ENCODE measurements at regions of chr2 and their contacts with region 1.

Region 1: DNA sequence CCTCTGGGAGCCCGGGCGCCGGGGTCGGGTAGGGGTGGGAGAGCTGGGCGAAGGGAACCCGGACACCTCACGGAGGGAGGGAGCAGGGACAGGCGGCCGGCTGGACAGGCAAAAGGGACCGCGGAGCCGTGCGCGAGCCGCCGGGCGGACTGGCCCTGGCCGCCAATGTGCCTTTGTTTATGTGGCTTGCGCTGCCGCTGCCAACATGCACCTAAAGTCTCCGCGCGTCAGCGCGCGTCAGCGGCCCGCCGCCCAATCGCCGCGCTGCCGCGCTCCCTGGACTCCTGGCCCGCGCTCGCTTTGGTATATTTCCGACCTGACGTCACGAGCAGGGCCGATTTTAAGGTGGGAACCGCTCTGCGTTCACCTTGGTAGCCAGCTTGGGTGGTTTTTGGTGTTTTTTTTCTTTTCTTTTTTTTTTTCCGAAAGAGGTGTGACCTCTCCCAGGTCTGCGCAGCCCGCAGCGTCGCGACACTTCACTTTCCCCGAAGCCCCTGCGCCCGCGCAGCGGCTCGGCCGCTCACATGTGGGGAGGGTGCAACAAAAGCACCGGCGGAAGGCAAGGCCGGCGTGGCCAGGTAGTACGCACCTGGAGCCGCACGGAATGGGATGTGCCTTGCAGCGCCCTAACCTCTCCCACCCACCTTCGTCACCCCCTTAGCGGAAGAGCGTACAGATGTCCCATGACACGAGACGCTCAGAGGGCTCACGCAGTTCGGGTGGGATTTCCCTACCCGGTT is at the start of gene NR4A2:
- DNase-seq: peak; percentile 83 to 95 (median 90)
- ATAC-seq: peak; percentile 72
- H3K4me3 ChIP-seq: peak within 1 kb of the TSS; percentile 90
- H3K4me3 Mint-ChIP-seq: peak within 1 kb of the TSS; percentile 90 to 99 (median 96)
- H3K27ac ChIP-seq: peak within 1 kb of the TSS; percentile 100
- H3K27ac Mint-ChIP-seq: peak within 1 kb of the TSS; percentile 92 to 100 (median 99)
- H3K4me1 ChIP-seq: peaks cover 0 to 4% of the 10 kb centered on the region in 2 donors
- H3K4me1 Mint-ChIP-seq: peaks cover 27 to 47% (median 40%) of the 10 kb centered on the region in 7 donors
- H3K27me3 ChIP-seq: no peaks in the 10 kb centered on the region
- H3K27me3 Mint-ChIP-seq: peaks cover 9 to 27% (median 16%) of the 10 kb centered on the region in 5 donors
- total RNA-seq, gene NR4A2: 2.2 to 252 (median 3.2) TPM

Region 2: GRCh38 chr2:155528034-155528433 is 804.7 kb before region 1 on chr2:
- CTCF ChIA-PET with region 1: no interaction called
- POLR2A ChIA-PET with region 1: no interaction called
- intact Hi-C with region 1: no loop called
- DNase-seq: no peak
- ATAC-seq: no peak
- H3K4me3 ChIP-seq: no peak overlapping the region
- H3K4me3 Mint-ChIP-seq: no peak overlapping the region
- H3K27ac ChIP-seq: no peak overlapping the region
- H3K27ac Mint-ChIP-seq: no peak overlapping the region
- H3K4me1 ChIP-seq: no peaks in the 10 kb centered on the region
- H3K4me1 Mint-ChIP-seq: no peaks in the 10 kb centered on the region
- H3K27me3 ChIP-seq: no peaks in the 10 kb centered on the region
- H3K27me3 Mint-ChIP-seq: no peaks in the 10 kb centered on the region

Region 3: GRCh38 chr2:155994315-155994714 is 338.4 kb before region 1 on chr2:
- CTCF ChIA-PET with region 1: no interaction called
- POLR2A ChIA-PET with region 1: no interaction called
- intact Hi-C with region 1: no loop called
- DNase-seq: no peak
- ATAC-seq: no peak
- H3K4me3 ChIP-seq: no peak overlapping the region
- H3K4me3 Mint-ChIP-seq: no peak overlapping the region
- H3K27ac ChIP-seq: no peak overlapping the region
- H3K27ac Mint-ChIP-seq: no peak overlapping the region
- H3K4me1 ChIP-seq: no peaks in the 10 kb centered on the region
- H3K4me1 Mint-ChIP-seq: no peaks in the 10 kb centered on the region
- H3K27me3 ChIP-seq: no peaks in the 10 kb centered on the region
- H3K27me3 Mint-ChIP-seq: peaks cover 0 to 4% (median 0%) of the 10 kb centered on the region in 5 donors

Region 4: DNA sequence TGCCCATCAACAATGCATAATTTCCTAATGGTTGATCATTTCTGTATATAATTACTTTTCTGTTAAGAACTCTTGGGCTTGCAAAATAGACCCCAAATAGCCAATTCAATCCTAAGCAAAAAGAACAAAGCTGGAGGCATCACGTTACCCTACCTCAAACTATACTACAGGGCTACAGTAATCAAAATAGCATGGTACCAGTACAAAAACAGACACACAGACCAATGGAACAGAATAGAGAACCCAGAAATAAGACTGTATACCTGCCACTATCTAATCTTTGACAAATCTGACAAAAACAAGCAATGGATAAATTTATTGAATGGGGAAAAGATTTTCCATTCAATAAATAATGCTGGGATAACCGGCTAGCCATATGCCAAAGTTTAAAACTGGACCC is 78.9 kb before region 1 on chr2:
- CTCF ChIA-PET with region 1: no interaction called
- POLR2A ChIA-PET with region 1: no interaction called
- intact Hi-C with region 1: loop called in 1 of 2 experiments (anchors 5 kb)
- DNase-seq: no peak
- ATAC-seq: no peak
- H3K4me3 ChIP-seq: no peak overlapping the region
- H3K4me3 Mint-ChIP-seq: peak overlapping the region in 7 of 10 donors; percentile 42 to 83 (median 75)
- H3K27ac ChIP-seq: no peak overlapping the region
- H3K27ac Mint-ChIP-seq: peak overlapping the region in 2 of 9 donors; percentile 7 to 88
- H3K4me1 ChIP-seq: no peaks in the 10 kb centered on the region
- H3K4me1 Mint-ChIP-seq: peaks cover 0 to 6% (median 0%) of the 10 kb centered on the region in 7 donors
- H3K27me3 ChIP-seq: no peaks in the 10 kb centered on the region
- H3K27me3 Mint-ChIP-seq: peaks cover 0 to 16% (median 9%) of the 10 kb centered on the region in 5 donors

Region 5: DNA sequence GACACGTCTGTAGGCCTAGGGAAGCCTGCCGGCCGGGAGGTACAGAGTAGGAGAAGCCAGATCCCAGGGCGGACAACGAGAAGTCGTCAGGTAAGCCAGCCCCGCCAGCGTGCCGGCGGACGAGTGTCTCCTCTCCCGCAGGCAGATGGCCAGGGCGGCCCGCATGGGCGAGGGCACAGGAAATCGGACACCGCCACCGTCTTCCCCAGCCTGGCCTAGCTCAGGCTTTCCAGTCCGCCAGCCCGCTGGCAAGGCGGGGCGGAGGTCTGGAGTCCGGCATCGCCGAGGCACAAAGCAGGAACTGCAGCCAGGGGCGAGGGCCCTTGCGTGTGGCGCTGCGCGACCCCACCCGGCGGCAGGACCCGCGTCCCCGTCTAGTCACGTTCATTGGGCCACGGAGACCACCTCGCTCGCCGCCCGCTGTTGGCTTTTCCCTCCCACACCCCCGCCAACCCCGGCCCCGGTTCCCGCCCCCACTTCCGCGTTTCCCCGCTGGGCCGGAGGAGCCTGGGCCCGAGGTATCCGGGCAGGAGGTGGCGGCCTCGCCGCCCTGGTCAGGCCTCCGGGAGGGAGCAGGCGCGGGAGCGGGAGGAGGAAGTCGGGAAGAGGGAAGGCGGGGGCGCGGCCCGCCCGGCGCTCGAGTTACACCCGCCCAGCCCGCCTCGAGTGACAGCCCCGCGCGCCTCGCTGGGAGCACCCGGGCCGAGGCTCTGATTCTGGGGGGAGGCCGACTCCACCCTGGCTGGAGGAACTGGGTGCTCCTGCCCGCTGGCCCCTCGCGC is 103.2 kb after region 1 on chr2 and contains the start of gene GPD2:
- CTCF ChIA-PET with region 1: no interaction called
- POLR2A ChIA-PET with region 1: interaction called, 20 read pairs
- intact Hi-C with region 1: loop called (anchors 1 kb)
- DNase-seq: peak; percentile 37 to 71 (median 58)
- ATAC-seq: peak; percentile 74
- H3K4me3 ChIP-seq: peak within 1 kb of the TSS; percentile 72
- H3K4me3 Mint-ChIP-seq: peak within 1 kb of the TSS; percentile 87 to 100 (median 98)
- H3K27ac ChIP-seq: peak within 1 kb of the TSS; percentile 71
- H3K27ac Mint-ChIP-seq: peak within 1 kb of the TSS; percentile 93 to 98 (median 95)
- H3K4me1 ChIP-seq: peaks cover 16 to 18% of the 10 kb centered on the region in 2 donors
- H3K4me1 Mint-ChIP-seq: peaks cover 25 to 51% (median 38%) of the 10 kb centered on the region in 7 donors
- H3K27me3 ChIP-seq: no peaks in the 10 kb centered on the region
- H3K27me3 Mint-ChIP-seq: no peaks in the 10 kb centered on the region
- total RNA-seq, gene GPD2: 7.8 to 17.1 (median 11.6) TPM

Region 6: DNA sequence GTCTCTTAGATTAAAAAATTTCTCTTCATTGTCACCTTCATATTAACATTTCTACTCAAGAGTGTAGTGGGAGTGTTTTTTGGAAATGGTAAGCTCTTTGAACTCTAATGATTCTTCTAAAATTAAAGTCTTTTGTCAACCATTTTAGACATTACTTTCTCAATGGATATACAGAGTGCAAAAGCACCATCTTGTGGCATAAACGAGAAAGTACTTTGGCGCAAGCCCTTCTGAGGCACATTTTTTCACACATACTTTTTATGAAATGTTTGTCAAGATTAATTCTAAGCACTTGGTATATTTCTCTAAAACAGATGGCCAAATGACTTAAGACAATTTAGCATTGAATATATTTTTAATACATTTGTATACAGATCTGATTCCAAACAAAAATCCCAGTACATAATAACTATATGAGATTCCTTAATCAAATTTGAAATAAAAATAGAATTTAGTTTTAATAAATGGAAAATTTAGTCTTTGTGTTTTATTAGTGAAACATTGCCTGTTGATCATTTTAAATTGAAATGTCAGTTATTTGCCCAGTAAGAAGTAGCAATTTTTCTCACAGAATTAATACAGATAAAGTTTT is 861.5 kb after region 1 on chr2:
- CTCF ChIA-PET with region 1: no interaction called
- POLR2A ChIA-PET with region 1: no interaction called
- intact Hi-C with region 1: loop called in 1 of 2 experiments (anchors 10 kb)
- DNase-seq: peak in 5 of 9 donors; percentile 6 to 26 (median 15)
- ATAC-seq: peak; percentile 58
- H3K4me3 ChIP-seq: no peak overlapping the region
- H3K4me3 Mint-ChIP-seq: no peak overlapping the region
- H3K27ac ChIP-seq: no peak overlapping the region
- H3K27ac Mint-ChIP-seq: no peak overlapping the region
- H3K4me1 ChIP-seq: no peaks in the 10 kb centered on the region
- H3K4me1 Mint-ChIP-seq: peaks cover 0 to 6% (median 1%) of the 10 kb centered on the region in 7 donors
- H3K27me3 ChIP-seq: no peaks in the 10 kb centered on the region
- H3K27me3 Mint-ChIP-seq: peaks cover 0 to 10% (median 5%) of the 10 kb centered on the region in 5 donors

Region 7: GRCh38 chr2:157468931-157469708 is 1136.4 kb after region 1 on chr2:
- CTCF ChIA-PET with region 1: no interaction called
- POLR2A ChIA-PET with region 1: no interaction called
- intact Hi-C with region 1: loop called (anchors 1 to 5 kb)
- DNase-seq: peak in 7 of 9 donors; percentile 56 to 83 (median 74)
- ATAC-seq: peak; percentile 90
- H3K4me3 ChIP-seq: no peak overlapping the region
- H3K4me3 Mint-ChIP-seq: peak overlapping the region; percentile 42 to 85 (median 71)
- H3K27ac ChIP-seq: peak overlapping the region; percentile 77
- H3K27ac Mint-ChIP-seq: peak overlapping the region; percentile 88 to 99 (median 97)
- H3K4me1 ChIP-seq: peaks cover 22 to 36% of the 10 kb centered on the region in 2 donors
- H3K4me1 Mint-ChIP-seq: peaks cover 41 to 90% (median 77%) of the 10 kb centered on the region in 7 donors
- H3K27me3 ChIP-seq: no peaks in the 10 kb centered on the region
- H3K27me3 Mint-ChIP-seq: no peaks in the 10 kb centered on the region